ENCODE measurements at regions of chr2 and their contacts with region 1.

Region 1: GRCh38 chr2:101012706-101013181 is 10.7 kb downstream of the RPL31 start:
- DNase-seq: peak; percentile 60
- H3K4me3 Mint-ChIP-seq: no peak overlapping the region
- H3K27ac Mint-ChIP-seq: no peak overlapping the region
- H3K4me1 Mint-ChIP-seq: peaks cover 3% of the 10 kb centered on the region
- H3K27me3 Mint-ChIP-seq: no peaks in the 10 kb centered on the region
- CTCF ChIP-seq: peak; percentile 63

Region 2: DNA sequence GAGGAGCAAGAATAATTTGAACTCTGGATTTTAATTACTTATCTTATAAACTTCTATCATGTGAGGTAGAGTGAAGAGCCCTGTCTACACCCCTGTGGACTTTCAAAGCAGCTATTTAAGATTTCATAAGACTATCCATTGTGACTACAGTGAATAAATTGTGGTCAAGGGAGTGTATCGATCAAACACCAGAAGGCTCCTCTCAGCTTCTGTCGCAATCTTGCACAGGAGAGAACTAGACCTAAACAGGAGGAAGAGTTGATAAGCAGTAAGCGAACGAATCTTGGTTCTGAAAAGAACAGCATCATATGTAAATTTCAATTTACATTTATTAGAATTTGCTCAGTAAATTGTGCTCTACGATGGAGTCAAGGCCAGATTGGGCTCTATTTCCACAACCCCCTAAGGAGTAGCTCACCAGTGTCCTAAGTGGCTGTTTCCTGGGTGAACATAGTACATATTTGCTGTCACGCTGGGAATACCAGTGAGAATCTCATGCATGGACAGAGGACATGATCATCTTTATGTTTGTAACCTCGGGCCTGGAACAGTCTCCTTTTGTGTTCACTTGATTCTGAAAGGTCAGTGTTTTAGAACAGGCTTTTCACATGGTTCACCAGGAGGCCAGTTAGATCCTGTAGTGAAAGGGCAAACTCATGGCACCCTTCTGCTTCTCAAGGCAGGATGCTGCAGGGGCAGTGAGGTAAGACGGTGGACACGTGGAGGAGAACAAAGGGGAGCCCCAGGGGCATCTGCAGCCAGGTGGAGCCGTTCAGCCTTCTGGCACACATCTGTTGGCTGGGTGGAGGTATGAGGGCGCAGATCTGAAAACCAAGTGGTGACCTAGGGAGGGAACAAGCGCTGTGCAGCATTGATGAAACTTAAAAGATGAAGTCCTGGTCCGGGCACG is 159.5 kb before region 1 on chr2:
- CTCF ChIA-PET with region 1: no interaction called
- POLR2A ChIA-PET with region 1: no interaction called
- intact Hi-C with region 1: no loop called
- DNase-seq: no peak
- H3K4me3 Mint-ChIP-seq: no peak overlapping the region
- H3K27ac Mint-ChIP-seq: no peak overlapping the region
- H3K4me1 Mint-ChIP-seq: peaks cover 5% of the 10 kb centered on the region
- H3K27me3 Mint-ChIP-seq: no peaks in the 10 kb centered on the region
- CTCF ChIP-seq: no peak

Region 3: GRCh38 chr2:101001691-101002561 is 10.8 kb before region 1 on chr2 and contains the start of gene RPL31:
- CTCF ChIA-PET with region 1: interaction called, 12 read pairs
- POLR2A ChIA-PET with region 1: interaction called, 13 read pairs
- intact Hi-C with region 1: no loop called
- DNase-seq: peak; percentile 98
- H3K4me3 Mint-ChIP-seq: peak within 1 kb of the TSS; percentile 92
- H3K27ac Mint-ChIP-seq: peak within 1 kb of the TSS; percentile 99
- H3K4me1 Mint-ChIP-seq: peaks cover 19% of the 10 kb centered on the region
- H3K27me3 Mint-ChIP-seq: no peaks in the 10 kb centered on the region
- CTCF ChIP-seq: no peak
- total RNA-seq, gene RPL31: 1,648 and 1,732 TPM in 2 replicates

Region 4: GRCh38 chr2:101030863-101031554 is 18.3 kb after region 1 on chr2:
- CTCF ChIA-PET with region 1: interaction called, 15 read pairs
- POLR2A ChIA-PET with region 1: interaction called, 4 read pairs
- intact Hi-C with region 1: no loop called
- DNase-seq: no peak
- H3K4me3 Mint-ChIP-seq: no peak overlapping the region
- H3K27ac Mint-ChIP-seq: no peak overlapping the region
- H3K4me1 Mint-ChIP-seq: no peaks in the 10 kb centered on the region
- H3K27me3 Mint-ChIP-seq: no peaks in the 10 kb centered on the region
- CTCF ChIP-seq: no peak

Region 5: DNA sequence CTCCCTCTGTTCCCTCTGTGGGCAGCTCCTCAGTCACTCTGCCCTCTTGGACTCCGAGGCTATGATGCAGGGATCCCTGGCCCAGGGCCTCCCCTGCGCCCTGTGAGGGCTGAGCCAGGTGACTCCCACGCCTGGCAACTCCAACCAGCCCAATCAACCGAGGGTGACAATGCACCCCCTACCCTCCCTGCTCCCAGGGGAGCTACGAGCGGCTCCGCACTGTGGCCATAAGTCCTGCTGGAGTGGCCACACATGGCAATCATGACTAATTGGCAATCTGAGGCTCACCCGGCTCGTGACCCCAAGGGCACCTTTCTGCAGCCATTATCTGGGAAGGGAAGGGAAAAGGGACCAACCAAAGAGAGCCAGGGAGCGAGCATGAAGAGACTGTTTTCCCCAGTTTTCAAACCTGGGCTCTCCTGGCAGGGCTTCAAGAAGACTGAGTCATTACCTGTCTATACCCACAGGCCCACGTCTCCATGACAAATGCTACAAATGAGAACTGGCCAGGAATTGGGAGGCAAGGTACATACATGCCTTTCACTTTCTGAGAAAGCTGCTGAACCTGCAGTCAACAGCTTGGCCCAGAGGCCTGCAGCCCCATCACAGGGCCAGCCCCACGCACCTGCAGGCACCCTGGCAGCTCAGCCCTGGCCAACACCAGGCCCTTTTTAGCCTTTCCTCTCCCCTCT is 34.5 kb after region 1 on chr2:
- CTCF ChIA-PET with region 1: interaction called, 11 read pairs
- POLR2A ChIA-PET with region 1: interaction called, 3 read pairs
- intact Hi-C with region 1: no loop called
- DNase-seq: peak; percentile 97
- H3K4me3 Mint-ChIP-seq: no peak overlapping the region
- H3K27ac Mint-ChIP-seq: peak overlapping the region; percentile 91
- H3K4me1 Mint-ChIP-seq: peaks cover 13% of the 10 kb centered on the region
- H3K27me3 Mint-ChIP-seq: no peaks in the 10 kb centered on the region
- CTCF ChIP-seq: no peak